Sigmoid colon (tissue), 7 donors: ENCODE measurements at regions of chr5 and their contacts with region 1.

Region 1: GRCh38 chr5:43120720-43121564 is at the start of gene ZNF131:
- DNase-seq: peak; percentile 98
- H3K4me3 ChIP-seq: peak within 1 kb of the TSS; percentile 77 to 90 (median 86)
- H3K27ac ChIP-seq: peak within 1 kb of the TSS; percentile 97 to 100 (median 98)
- H3K4me1 ChIP-seq: peaks cover 0 to 28% (median 23%) of the 10 kb centered on the region in 4 donors
- H3K27me3 ChIP-seq: no peaks in the 10 kb centered on the region
- CTCF ChIP-seq: no peak
- EP300 ChIP-seq: peak in 1 of 4 donors; percentile 58
- POLR2A ChIP-seq: peak in 1 of 2 donors; percentile 67
- total RNA-seq, gene ZNF131: 21.7 to 35.3 (median 29.2) TPM

Region 2: GRCh38 chr5:42994246-42995151 is 126.4 kb before region 1 on chr5:
- intact Hi-C with region 1: loop called (anchors 5 kb)
- DNase-seq: peak; percentile 90
- H3K4me3 ChIP-seq: peak overlapping the region; percentile 10 to 53 (median 29)
- H3K27ac ChIP-seq: peak overlapping the region; percentile 61 to 88 (median 73)
- H3K4me1 ChIP-seq: peaks cover 0 to 28% (median 16%) of the 10 kb centered on the region in 4 donors
- H3K27me3 ChIP-seq: peaks cover 46 to 100% (median 90%) of the 10 kb centered on the region in 3 donors
- CTCF ChIP-seq: peak; percentile 57 to 86 (median 81)
- EP300 ChIP-seq: no peak
- POLR2A ChIP-seq: no peak

Region 3: DNA sequence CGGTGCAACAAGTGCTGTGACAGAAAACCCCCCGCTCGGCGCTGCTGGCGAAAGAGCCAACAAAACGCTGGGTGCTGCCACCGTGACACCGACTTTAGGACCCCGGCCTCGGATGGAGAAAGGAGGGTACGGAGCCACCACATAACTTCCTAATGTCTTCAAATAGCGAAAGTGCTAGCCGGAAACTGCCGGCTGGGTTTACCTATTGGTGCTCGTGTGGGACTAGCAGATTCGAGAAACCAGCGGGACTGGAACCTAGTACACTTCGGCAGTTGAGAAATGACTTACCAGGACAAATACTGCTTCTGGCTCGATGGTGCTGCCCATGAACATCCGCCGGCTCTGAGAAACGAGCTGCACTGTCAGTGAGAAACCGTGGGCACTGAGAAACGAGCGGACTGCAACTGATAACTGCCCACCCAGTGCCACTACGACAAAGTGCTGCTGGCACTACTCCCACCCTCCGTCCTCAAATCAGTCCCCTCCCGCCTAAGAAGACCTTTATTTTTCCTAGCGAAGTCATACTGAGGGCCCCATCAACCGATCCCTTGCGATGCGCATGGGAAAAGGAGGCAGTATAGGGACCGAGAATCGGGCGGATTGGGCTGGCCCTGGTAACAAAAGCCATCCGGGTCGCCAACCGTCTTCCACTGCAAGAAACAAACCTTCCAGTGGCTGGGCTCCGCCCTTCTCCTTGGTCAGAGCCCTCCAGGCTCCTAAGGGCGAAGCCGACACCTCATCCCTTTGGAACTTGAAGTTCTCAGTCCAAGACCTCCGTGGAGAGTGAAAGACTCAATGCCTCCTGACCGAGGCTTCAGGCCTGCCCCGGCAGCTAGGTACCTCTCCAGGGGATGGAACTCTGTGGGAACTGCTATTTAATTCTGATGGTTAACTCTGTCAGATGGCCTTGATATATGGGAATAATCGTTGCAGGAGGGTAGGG is 53.9 kb before region 1 on chr5:
- intact Hi-C with region 1: loop called (anchors 2 kb)
- DNase-seq: peak; percentile 93
- H3K4me3 ChIP-seq: peak overlapping the region; percentile 65 to 91 (median 80)
- H3K27ac ChIP-seq: peak overlapping the region; percentile 94 to 100 (median 98)
- H3K4me1 ChIP-seq: peaks cover 0 to 38% (median 25%) of the 10 kb centered on the region in 4 donors
- H3K27me3 ChIP-seq: no peaks in the 10 kb centered on the region
- CTCF ChIP-seq: no peak
- EP300 ChIP-seq: no peak
- POLR2A ChIP-seq: peak; percentile 78 to 83

Region 4: GRCh38 chr5:43313035-43313853 is 192.3 kb after region 1 on chr5 and contains the start of gene HMGCS1:
- intact Hi-C with region 1: loop called (anchors 5 kb)
- DNase-seq: peak; percentile 99
- H3K4me3 ChIP-seq: peak within 1 kb of the TSS; percentile 58 to 89 (median 75)
- H3K27ac ChIP-seq: peak within 1 kb of the TSS; percentile 87 to 94 (median 89)
- H3K4me1 ChIP-seq: peaks cover 0 to 28% (median 18%) of the 10 kb centered on the region in 4 donors
- H3K27me3 ChIP-seq: no peaks in the 10 kb centered on the region
- CTCF ChIP-seq: no peak
- EP300 ChIP-seq: no peak
- POLR2A ChIP-seq: peak; percentile 90 to 96
- total RNA-seq, gene HMGCS1: 13.0 to 20.7 (median 16.0) TPM

Region 5: DNA sequence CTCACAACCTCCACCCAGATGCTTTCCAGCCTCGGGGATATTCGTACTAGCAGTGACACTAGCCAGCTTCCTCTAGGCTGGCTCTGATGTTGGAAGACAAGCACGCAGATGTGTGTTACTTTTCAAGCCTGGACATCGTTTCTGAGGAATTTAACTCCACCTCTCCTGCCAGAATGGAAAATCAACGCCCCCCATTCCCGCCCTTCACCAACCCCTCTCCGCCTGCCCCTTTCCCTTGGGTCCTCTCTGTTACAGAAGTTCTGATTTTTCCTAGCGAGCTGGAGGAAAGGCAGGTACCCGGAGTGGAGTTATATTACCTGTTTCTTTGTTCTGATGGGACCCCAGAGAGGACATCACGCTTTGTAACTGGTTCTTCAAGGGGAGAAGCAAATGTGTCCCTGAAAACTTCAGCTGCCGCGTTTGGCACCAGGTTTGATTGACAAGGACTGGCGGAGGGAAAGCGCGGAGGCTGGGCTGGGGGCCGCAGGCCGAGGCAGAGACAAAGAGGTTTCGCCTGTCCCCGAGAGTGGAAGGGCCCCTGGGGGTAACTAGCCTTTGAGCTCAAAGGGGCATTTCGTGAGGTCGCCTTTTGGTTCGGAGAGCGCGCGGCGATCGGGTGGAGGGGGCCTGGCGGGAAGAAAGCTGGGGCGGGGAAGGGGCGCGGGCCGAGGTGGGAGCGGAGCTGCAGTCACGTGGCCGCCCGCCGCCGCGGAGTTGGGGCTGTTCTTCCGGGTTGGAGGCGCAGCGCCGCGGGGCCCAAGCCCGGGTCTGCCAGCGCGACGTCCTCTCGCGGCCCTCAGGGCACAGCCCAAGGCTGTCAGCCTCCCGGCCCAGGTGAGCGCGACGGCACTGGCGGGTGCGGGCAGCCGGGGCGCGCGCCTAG is 481.8 kb after region 1 on chr5 and contains the start of gene NNT:
- intact Hi-C with region 1: loop called (anchors 5 kb)
- DNase-seq: peak; percentile 87
- H3K4me3 ChIP-seq: peak within 1 kb of the TSS; percentile 71 to 93 (median 84)
- H3K27ac ChIP-seq: peak within 1 kb of the TSS; percentile 89 to 96 (median 92)
- H3K4me1 ChIP-seq: peaks cover 0 to 35% (median 23%) of the 10 kb centered on the region in 4 donors
- H3K27me3 ChIP-seq: no peaks in the 10 kb centered on the region
- CTCF ChIP-seq: no peak
- EP300 ChIP-seq: no peak
- POLR2A ChIP-seq: no peak
- total RNA-seq, gene NNT: 48.5 to 80.3 (median 73.7) TPM